Sigmoid colon (tissue), 7 donors: ENCODE measurements at regions of chrX and their contacts with region 1.

Region 1: GRCh38 chrX:54357414-54358377 is at the start of gene WNK3:
- DNase-seq: peak; percentile 92
- H3K4me3 ChIP-seq: peak within 1 kb of the TSS; percentile 34 to 55 (median 52)
- H3K27ac ChIP-seq: peak within 1 kb of the TSS; percentile 68 to 78 (median 70)
- H3K4me1 ChIP-seq: peaks cover 0 to 4% (median 0%) of the 10 kb centered on the region in 4 donors
- H3K27me3 ChIP-seq: no peaks in the 10 kb centered on the region
- CTCF ChIP-seq: no peak
- EP300 ChIP-seq: no peak
- POLR2A ChIP-seq: no peak
- total RNA-seq, gene WNK3: 1.6 to 1.9 (median 1.7) TPM

Region 2: GRCh38 chrX:54044126-54044876 is 313.4 kb before region 1 on chrX and contains the start of gene PHF8:
- intact Hi-C with region 1: loop called (anchors 10 kb)
- DNase-seq: peak; percentile 97
- H3K4me3 ChIP-seq: peak within 1 kb of the TSS; percentile 62 to 76 (median 68)
- H3K27ac ChIP-seq: peak within 1 kb of the TSS; percentile 91 to 95 (median 93)
- H3K4me1 ChIP-seq: no peaks in the 10 kb centered on the region
- H3K27me3 ChIP-seq: no peaks in the 10 kb centered on the region
- CTCF ChIP-seq: no peak
- EP300 ChIP-seq: no peak
- POLR2A ChIP-seq: peak; percentile 16 to 31
- total RNA-seq, gene PHF8: 15.3 to 44.9 (median 22.1) TPM

Region 3: DNA sequence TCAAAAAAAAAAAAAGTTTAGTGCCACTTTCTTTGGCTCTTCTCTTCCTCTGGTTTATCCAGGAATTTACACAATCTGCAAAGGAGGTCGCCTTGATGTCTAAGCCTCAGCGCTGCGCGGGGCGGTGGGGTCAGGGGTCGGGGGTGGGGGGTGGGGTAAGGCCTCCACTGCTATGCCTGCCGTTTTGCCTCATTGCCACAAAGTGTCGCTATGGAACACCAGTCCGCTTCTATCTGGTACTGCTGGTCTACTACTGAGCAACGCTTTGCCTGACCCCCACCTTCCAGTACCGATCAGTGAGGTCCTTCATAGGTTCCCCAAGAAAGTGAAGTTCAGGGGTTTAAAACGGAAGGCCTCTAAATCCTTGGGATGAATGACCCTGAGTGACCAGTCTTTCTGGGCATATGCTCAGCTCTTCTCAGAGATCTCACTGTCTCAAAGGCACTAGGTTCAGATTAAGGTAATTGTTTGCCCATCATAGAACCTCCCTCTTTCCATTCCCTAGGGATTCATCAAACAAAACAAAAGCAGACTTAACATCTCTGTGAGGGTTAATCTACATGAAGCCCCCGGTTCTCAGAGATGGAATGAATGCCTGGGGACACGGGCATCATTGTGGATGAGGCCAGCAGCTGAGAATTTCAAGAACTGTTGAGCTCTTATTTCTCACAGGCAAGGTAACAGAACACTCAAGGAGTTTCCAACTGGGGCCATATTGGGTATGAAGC is 65.6 kb after region 1 on chrX:
- intact Hi-C with region 1: no loop called
- DNase-seq: no peak
- H3K4me3 ChIP-seq: no peak overlapping the region
- H3K27ac ChIP-seq: no peak overlapping the region
- H3K4me1 ChIP-seq: no peaks in the 10 kb centered on the region
- H3K27me3 ChIP-seq: no peaks in the 10 kb centered on the region
- CTCF ChIP-seq: no peak
- EP300 ChIP-seq: no peak
- POLR2A ChIP-seq: no peak

Region 4: GRCh38 chrX:54495814-54496516 is 138.3 kb after region 1 on chrX and contains the start of gene FGD1:
- intact Hi-C with region 1: loop called (anchors 5 kb)
- DNase-seq: peak; percentile 85
- H3K4me3 ChIP-seq: peak within 1 kb of the TSS; percentile 53 to 66 (median 62)
- H3K27ac ChIP-seq: peak within 1 kb of the TSS; percentile 78 to 85 (median 83)
- H3K4me1 ChIP-seq: peaks cover 0 to 25% (median 14%) of the 10 kb centered on the region in 4 donors
- H3K27me3 ChIP-seq: no peaks in the 10 kb centered on the region
- CTCF ChIP-seq: no peak
- EP300 ChIP-seq: no peak
- POLR2A ChIP-seq: no peak
- total RNA-seq, gene FGD1: 3.2 to 9.7 (median 4.0) TPM